PC-9 (cell line): ENCODE measurements at regions of chr13 and their contacts with region 1.

Region 1: GRCh38 chr13:79018166-79018565 is 359.2 kb upstream of the OBI1 start:
- DNase-seq: no peak
- H3K4me3 ChIP-seq: no peak overlapping the region
- H3K27ac ChIP-seq: no peak overlapping the region
- H3K4me1 ChIP-seq: no peaks in the 10 kb centered on the region
- H3K27me3 ChIP-seq: no peaks in the 10 kb centered on the region
- CTCF ChIP-seq: no peak

Region 2: GRCh38 chr13:78576261-78576660 is 441.9 kb before region 1 on chr13:
- CTCF ChIA-PET with region 1: no interaction called
- POLR2A ChIA-PET with region 1: no interaction called
- intact Hi-C with region 1: loop called (anchors 5 kb)
- DNase-seq: no peak
- H3K4me3 ChIP-seq: no peak overlapping the region
- H3K27ac ChIP-seq: no peak overlapping the region
- H3K4me1 ChIP-seq: no peaks in the 10 kb centered on the region
- H3K27me3 ChIP-seq: no peaks in the 10 kb centered on the region
- CTCF ChIP-seq: no peak

Region 3: DNA sequence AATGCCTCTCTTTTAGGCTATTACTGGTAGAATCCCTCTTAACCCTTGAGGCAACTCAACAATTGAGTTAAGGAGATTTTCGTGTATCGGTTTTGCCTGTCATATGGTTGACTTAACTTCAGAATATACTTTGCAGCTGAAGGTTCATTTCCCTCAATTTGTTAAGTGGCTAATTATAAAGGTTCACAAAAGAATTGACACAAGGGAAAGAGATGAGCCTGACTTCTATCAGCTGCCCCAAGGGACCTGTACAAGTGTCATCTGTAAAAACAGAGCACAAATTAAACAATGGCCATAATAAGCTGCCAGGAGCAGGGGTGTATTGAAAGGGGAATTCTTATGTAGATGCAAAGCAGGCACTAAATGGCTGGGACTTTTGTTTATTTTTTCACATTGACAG is 24.4 kb before region 1 on chr13:
- CTCF ChIA-PET with region 1: no interaction called
- POLR2A ChIA-PET with region 1: no interaction called
- intact Hi-C with region 1: no loop called
- DNase-seq: no peak
- H3K4me3 ChIP-seq: no peak overlapping the region
- H3K27ac ChIP-seq: no peak overlapping the region
- H3K4me1 ChIP-seq: no peaks in the 10 kb centered on the region
- H3K27me3 ChIP-seq: no peaks in the 10 kb centered on the region
- CTCF ChIP-seq: no peak